H1 (cell line): ENCODE measurements at regions of chr5 and their contacts with region 1.

Region 1: DNA sequence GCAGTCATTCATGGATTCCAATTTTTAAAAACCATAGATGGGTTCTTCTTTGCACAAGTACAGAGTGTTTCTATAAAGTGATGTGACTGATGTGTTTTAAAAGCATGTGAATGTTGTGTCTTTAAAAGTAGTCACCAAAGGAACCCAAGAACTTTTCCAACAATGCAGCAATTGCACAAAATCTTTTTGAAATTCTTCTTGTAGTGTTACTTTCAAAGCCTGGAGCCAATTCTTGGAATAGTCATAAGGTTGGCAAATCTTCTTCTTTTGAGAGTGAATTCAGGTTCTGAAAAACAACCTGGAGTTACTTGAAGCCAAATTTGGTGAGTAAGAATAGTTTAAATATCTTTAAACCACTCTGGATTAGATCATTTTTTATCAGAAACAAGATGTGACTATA is 10.5 kb downstream of the GRAMD2B start:
- DNase-seq: no peak
- H3K4me3 ChIP-seq: no peak overlapping the region
- H3K27ac ChIP-seq: no peak overlapping the region
- H3K4me1 ChIP-seq: no peaks in the 10 kb centered on the region
- H3K27me3 ChIP-seq: no peaks in the 10 kb centered on the region
- CTCF ChIP-seq: no peak
- EP300 ChIP-seq: no peak
- POLR2A ChIP-seq: no peak
- RAD21 ChIP-seq: no peak

Region 2: GRCh38 chr5:126422989-126423788 is 10.5 kb before region 1 on chr5 and contains the start of gene GRAMD2B:
- CTCF ChIA-PET with region 1: no interaction called
- POLR2A ChIA-PET with region 1: interaction called, 11 read pairs
- DNase-seq: peak; percentile 64 to 82
- H3K4me3 ChIP-seq: peak within 1 kb of the TSS; percentile 55 to 88 (median 82)
- H3K27ac ChIP-seq: peak within 1 kb of the TSS; percentile 77
- H3K4me1 ChIP-seq: peaks cover 0 to 7% (median 3%) of the 10 kb centered on the region in 4 experiments; a peak in 4 of 7 replicates
- H3K27me3 ChIP-seq: no peaks in the 10 kb centered on the region
- CTCF ChIP-seq: no peak
- EP300 ChIP-seq: no peak
- POLR2A ChIP-seq: peak in 1 of 2 experiments; percentile 79; a peak in 2 of 3 replicates
- RAD21 ChIP-seq: 0 out of 4 replicates have a peak, but pooled peaks of 1 of the 2 experiments have one; percentile 2
- total RNA-seq, gene GRAMD2B: 9.4 and 11.7 TPM in 2 replicates

Region 3: GRCh38 chr5:126536874-126537273 is 103.2 kb after region 1 on chr5:
- CTCF ChIA-PET with region 1: interaction called, 12 read pairs
- POLR2A ChIA-PET with region 1: no interaction called
- DNase-seq: peak in 1 of 2 experiments; percentile 22
- H3K4me3 ChIP-seq: no peak overlapping the region
- H3K27ac ChIP-seq: no peak overlapping the region
- H3K4me1 ChIP-seq: peaks cover 0 to 2% (median under 1%) of the 10 kb centered on the region in 4 experiments; a peak in 3 of 7 replicates
- H3K27me3 ChIP-seq: no peaks in the 10 kb centered on the region
- CTCF ChIP-seq: no peak
- EP300 ChIP-seq: no peak
- POLR2A ChIP-seq: no peak
- RAD21 ChIP-seq: no peak